GM10248 (cell line): ENCODE measurements at regions of chr5 and their contacts with region 1.

Region 1: DNA sequence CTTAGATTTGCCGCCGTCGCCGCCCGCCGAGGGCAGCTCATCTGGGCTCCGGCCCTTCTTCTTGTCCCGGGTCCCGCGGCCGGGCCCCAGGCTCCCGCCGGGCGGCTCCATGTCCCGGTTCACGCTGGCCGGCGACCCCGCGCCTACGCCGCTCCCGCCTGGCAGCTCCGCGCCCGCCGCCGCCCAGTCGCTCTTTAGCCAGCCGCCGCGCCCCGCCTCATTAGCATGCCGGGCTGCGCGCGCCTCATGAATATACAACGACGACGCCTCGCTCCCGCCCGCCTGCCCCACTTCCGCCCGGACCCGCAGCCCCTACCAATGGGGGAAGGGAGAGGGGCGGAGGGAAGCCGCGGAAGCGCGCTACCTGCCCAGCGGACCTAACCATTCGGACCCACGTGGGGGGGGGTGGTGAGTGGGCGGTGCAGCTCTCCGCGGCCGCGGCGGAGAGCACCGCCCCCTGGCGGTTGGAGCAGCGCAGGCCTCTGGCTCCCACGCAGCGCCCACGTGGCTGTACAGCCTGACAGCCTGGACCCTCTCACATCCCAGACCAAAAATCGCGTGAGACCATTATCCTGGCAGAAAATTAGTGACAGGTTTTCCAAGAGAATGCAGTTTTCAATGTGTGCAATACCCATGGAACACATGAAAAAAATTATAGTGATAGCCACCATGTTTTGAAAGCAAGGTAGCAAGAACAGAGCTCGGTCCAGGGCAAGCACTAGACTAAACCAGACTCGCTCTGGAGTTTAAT is at the start of gene DIAPH1:
- DNase-seq: peak; percentile 96
- CTCF ChIP-seq: peak; percentile 92

Region 2: DNA sequence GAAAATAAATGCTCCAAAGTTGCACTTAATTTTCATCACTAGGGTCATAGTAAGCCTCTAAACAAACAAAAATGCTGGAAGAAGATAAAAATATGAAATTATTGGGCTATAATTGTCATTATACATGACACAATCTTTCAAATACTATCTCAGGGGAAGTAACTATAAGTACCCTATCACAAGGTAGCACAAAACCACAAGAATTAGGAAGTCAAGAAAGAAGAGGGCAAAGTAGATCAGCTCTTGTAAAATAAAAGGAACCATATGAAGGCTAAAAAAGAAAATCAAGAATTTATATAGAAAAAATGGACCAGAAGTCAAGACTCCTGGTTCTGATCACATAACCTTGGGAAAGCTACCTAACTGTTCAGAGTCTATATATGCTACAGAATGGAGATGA is 48.3 kb before region 1 on chr5:
- CTCF ChIA-PET with region 1: interaction called, 17 read pairs
- POLR2A ChIA-PET with region 1: no interaction called
- DNase-seq: no peak
- CTCF ChIP-seq: no peak

Region 3: GRCh38 chr5:141590127-141590526 is 28.9 kb before region 1 on chr5:
- CTCF ChIA-PET with region 1: interaction called, 359 read pairs
- POLR2A ChIA-PET with region 1: interaction called, 9 read pairs
- DNase-seq: no peak
- CTCF ChIP-seq: no peak

Region 4: DNA sequence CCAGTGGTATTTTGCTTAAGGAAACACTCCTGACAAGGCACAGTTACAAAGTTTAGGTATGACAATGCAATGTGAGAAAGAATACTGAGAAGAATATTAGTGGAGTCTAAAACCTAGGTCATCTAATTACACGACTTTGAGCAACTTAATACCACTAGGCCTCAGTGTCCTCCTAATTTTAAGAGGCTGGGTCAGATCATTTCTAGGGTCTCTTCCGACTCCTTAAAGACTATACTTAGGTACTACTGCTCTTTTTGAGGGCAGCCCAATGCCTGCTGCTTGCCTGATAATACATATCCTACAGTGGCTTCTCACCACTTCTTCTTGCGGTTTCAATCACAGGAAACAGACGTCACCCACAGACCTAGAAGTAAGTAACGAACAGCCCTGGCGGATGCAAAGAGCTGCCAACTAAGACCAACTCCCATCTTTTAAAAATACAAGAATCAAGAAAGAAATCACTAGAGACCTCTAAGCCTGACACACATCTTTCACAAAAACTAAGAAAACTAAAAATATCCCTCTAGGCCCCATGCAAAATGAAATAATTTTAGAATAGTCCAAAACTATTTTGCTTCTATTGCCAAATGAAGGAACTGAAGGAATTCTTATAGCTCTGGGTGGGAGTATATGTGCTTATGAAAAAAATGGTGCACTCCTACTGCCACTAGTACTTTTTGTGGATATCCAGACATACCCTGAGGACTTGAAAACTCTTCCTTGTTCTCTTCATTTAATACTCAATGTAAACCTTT is 13.3 kb before region 1 on chr5:
- CTCF ChIA-PET with region 1: interaction called, 288 read pairs
- POLR2A ChIA-PET with region 1: interaction called, 8 read pairs
- DNase-seq: peak; percentile 59
- CTCF ChIP-seq: no peak

Region 5: GRCh38 chr5:141636413-141637122 is 17.6 kb after region 1 on chr5 and contains the starts of genes HDAC3 and RELL2:
- CTCF ChIA-PET with region 1: interaction called, 442 read pairs
- POLR2A ChIA-PET with region 1: interaction called, 7 read pairs
- DNase-seq: peak; percentile 95
- CTCF ChIP-seq: no peak

Region 6: GRCh38 chr5:141650851-141651727 is 32.1 kb after region 1 on chr5 and contains the start of gene FCHSD1:
- CTCF ChIA-PET with region 1: interaction called, 442 read pairs
- POLR2A ChIA-PET with region 1: no interaction called
- DNase-seq: peak; percentile 99
- CTCF ChIP-seq: no peak

Region 7: DNA sequence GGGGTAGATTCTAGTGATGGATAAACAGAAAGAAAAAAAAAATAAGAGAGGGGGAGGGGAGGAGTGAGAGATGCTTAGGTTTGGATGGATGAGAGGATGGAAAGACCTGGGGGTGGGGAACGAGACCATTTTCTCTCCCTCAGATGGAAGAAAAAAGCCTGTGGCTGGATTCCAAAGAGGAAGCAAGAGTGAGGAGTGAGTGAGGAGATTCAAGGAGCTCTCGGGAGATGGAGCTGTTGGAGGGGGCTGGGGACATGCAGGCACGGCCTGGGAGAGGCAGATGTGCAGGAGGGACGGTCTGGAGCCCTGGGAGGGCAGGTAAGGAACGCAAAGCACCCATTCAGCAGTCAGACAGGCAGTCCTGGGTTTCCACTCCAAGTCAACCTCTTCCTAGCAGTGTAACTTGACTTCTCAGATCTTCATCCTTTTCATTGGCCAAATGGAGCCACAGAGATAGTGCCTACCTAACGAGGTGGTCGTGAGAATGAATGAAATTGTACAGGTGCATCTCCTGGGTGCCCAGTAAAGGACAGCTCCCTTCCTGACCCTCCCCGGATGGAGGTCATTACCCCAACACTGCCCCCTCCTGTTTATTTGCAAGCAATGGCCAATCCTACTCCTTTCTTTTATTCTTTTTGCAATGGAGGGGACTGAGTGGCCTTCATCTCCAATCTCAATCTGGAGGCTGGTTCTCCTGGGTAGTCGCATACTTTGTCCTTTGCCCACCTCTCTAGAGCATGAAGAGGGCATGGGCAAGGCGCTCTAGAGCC is 207.0 kb after region 1 on chr5:
- CTCF ChIA-PET with region 1: no interaction called
- POLR2A ChIA-PET with region 1: no interaction called
- DNase-seq: peak; percentile 60
- CTCF ChIP-seq: peak; percentile 29